Right ventricle myocardium inferior (tissue), 1 donor: ENCODE measurements at regions of chr6 and their contacts with region 1.

Region 1: GRCh38 chr6:53986165-53986720 is 125.0 kb upstream of the MLIP start:
- DNase-seq: peak; percentile 44
- ATAC-seq: peak; percentile 70

Region 2: DNA sequence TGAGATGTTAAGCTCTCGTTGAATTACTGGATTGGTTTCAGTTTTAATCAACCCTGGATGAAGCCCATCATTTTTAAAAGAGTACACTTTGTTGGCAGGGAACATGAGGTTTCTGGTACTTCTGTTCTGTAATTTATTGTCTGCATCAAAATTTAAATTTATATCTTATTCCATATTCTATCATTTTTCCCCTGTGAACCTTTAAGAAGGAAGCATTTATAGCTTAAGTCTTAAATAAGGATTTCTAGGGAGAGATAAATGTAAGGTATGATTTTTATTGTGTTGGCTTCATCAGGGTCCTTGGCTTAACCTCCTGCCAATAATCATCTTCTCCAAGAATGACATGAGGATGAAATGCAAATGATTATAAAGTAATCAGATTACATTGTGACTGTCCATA is 165.6 kb after region 1 on chr6:
- intact Hi-C with region 1: loop called (anchors 5 kb)
- DNase-seq: no peak
- ATAC-seq: no peak

Region 3: GRCh38 chr6:54267798-54268197 is 281.6 kb after region 1 on chr6:
- intact Hi-C with region 1: loop called (anchors 5 kb)
- DNase-seq: no peak
- ATAC-seq: no peak